Cardiac septum (tissue), 1 donor: ENCODE measurements at regions of chr17 and their contacts with region 1.

Region 1: GRCh38 chr17:41738077-41738735 is 3.8 kb upstream of the HAP1 start:
- DNase-seq: peak; percentile 92

Region 2: GRCh38 chr17:41801374-41802271 is 63.4 kb after region 1 on chr17:
- intact Hi-C with region 1: loop called (anchors 1 kb)
- DNase-seq: peak; percentile 89

Region 3: DNA sequence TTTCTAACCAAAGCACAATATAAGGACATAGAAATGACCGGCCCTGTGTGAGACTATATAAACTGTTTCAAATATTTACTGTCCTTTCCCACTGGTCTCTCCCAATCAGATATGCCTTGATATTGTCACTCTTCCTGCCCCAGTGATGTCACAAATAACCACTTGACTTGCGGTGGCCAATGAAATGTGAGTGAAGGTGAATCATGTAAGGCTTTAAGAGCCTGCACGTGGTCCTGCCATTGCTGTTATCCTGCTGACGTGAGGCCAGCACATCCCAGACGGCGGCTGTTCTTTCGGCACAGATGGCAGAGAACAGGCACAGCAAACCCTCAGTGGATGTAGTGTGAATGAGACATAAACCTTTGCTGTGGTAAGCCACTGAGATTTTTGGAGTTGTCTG is 132.4 kb after region 1 on chr17:
- intact Hi-C with region 1: loop called (anchors 10 kb)
- DNase-seq: no peak